WTC11 (cell line): ENCODE measurements at regions of chr9 and their contacts with region 1.

Region 1: GRCh38 chr9:114505187-114506081 is at the start of gene WHRN:
- DNase-seq: peak; percentile 95
- ATAC-seq: peak; percentile 78
- H3K4me3 Mint-ChIP-seq: peak within 1 kb of the TSS; percentile 82
- H3K27ac Mint-ChIP-seq: peak within 1 kb of the TSS; percentile 18; the same call in 1 of the 2 replicates
- H3K4me1 Mint-ChIP-seq: peaks cover 61% of the 10 kb centered on the region
- H3K27me3 Mint-ChIP-seq: peaks cover 17% of the 10 kb centered on the region
- CTCF ChIP-seq: no peak
- total RNA-seq, gene WHRN: 20.6 to 24.3 TPM (median 23.3 TPM) in 3 replicates

Region 2: DNA sequence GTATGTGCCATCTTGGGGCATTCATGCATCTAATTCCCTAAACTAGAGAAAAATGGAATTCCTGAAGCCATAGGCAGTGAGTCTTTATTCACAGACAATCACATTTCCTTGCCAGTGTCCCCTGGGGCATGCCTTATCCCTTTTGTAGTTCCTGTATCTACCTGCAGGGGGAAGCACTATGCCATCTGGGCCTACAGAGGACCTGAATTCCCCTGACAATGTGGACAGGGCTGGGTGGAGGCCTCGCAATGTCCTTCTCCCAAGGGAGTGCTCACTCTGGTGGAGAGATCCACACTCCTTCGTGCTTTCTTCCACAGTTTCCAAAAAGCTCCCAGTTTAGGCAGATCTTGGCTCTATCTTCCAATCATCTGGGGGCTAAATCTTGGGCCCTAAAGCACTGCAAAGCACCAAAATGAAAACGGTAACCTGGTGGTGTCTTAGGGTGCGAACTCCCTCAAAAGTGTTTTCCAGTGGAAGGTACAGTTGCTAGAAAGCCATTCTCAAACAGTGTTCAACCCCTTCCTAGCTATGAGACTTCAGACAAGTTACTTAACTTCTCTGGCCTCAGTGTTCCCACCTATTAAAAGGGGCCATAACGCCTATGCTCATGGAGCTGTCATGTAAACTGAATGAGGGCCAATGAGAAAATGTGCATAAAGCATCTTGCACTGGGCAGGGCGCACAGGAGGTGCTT is 17.7 kb before region 1 on chr9:
- CTCF ChIA-PET with region 1: interaction called, 32 read pairs
- POLR2A ChIA-PET with region 1: no interaction called
- DNase-seq: peak; percentile 69
- ATAC-seq: peak; percentile 97
- H3K4me3 Mint-ChIP-seq: no peak overlapping the region
- H3K27ac Mint-ChIP-seq: peak overlapping the region; percentile 2; the same call in 1 of the 2 replicates
- H3K4me1 Mint-ChIP-seq: peaks cover 7% of the 10 kb centered on the region
- H3K27me3 Mint-ChIP-seq: no peaks in the 10 kb centered on the region
- CTCF ChIP-seq: peak; percentile 86

Region 3: DNA sequence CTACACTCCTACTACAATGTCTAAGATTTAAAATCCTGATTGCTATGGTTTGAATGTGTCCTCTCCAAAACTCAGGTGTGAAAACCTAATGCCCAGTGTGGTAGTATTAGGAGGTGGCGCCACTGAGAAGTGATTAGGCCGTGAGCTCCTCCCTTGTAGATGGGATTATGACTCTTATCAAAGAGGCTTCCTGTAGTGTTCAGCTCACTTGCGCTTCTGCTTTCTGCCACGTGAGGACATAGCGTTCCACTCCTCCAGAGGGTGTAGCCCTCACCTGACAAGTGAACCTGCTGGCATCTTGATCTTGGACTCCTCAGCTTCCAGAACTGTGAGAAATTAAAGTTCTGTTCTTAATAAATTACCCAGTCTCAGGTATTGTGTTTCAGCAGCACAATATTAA is 32.8 kb after region 1 on chr9:
- CTCF ChIA-PET with region 1: interaction called, 19 read pairs
- POLR2A ChIA-PET with region 1: no interaction called
- DNase-seq: peak; percentile 46
- ATAC-seq: peak; percentile 100
- H3K4me3 Mint-ChIP-seq: no peak overlapping the region
- H3K27ac Mint-ChIP-seq: 0 out of 2 replicates have a peak overlapping the region, but pooled peaks have one; percentile 15
- H3K4me1 Mint-ChIP-seq: peaks cover 9% of the 10 kb centered on the region
- H3K27me3 Mint-ChIP-seq: no peaks in the 10 kb centered on the region
- CTCF ChIP-seq: no peak

Region 4: DNA sequence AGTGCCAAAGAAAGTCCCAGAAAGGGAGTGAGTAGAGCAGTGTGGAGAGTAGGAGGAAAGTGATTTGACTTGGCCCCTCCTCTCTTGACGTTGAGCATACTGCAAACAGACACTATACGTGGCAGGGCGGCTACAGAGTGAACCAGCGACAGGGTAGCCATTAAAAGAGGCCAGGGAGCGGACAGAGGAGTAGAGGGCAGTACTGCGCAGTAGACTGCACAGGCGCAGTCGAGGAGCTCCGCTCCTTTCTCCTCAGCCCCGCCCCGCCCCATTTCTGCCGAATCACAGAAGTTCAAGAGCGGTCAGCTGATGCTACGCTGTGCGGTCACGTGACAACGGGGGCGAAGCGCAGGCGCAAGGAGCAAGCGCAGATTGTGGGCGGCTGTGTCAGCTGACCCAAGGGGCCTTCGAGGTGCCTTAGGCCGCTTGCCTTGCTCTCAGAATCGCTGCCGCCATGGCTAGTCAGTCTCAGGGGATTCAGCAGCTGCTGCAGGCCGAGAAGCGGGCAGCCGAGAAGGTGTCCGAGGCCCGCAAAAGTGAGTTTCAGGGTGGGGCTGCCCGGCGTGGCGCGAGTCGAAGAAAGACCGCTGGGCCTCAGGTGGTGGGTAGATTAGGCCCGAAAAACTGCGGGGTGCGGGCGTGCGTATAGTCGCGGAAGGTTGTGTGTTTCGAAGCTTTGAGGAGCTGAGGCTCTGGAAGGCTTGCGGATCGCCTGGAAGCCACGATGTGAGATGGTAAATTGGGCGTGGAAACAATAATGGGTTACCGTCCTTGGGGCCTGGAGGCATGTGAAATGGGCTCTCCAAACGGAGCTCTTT is 82.2 kb after region 1 on chr9 and contains the start of gene ATP6V1G1:
- CTCF ChIA-PET with region 1: interaction called, 12 read pairs
- POLR2A ChIA-PET with region 1: interaction called, 6 read pairs
- DNase-seq: peak; percentile 100
- ATAC-seq: peak; percentile 90
- H3K4me3 Mint-ChIP-seq: peak within 1 kb of the TSS; percentile 100
- H3K27ac Mint-ChIP-seq: peak within 1 kb of the TSS; percentile 94
- H3K4me1 Mint-ChIP-seq: peaks cover 52% of the 10 kb centered on the region
- H3K27me3 Mint-ChIP-seq: no peaks in the 10 kb centered on the region
- CTCF ChIP-seq: no peak
- total RNA-seq, gene ATP6V1G1: 91.3 to 108 TPM (median 92.4 TPM) in 3 replicates

Region 5: GRCh38 chr9:114619191-114619761 is 113.8 kb after region 1 on chr9:
- CTCF ChIA-PET with region 1: no interaction called
- POLR2A ChIA-PET with region 1: no interaction called
- DNase-seq: no peak
- ATAC-seq: no peak
- H3K4me3 Mint-ChIP-seq: no peak overlapping the region
- H3K27ac Mint-ChIP-seq: 0 out of 2 replicates have a peak overlapping the region, but pooled peaks have one; percentile 38
- H3K4me1 Mint-ChIP-seq: no peaks in the 10 kb centered on the region
- H3K27me3 Mint-ChIP-seq: no peaks in the 10 kb centered on the region
- CTCF ChIP-seq: no peak